Left ventricle myocardium superior (tissue), 1 donor: ENCODE measurements at regions of chr1 and their contacts with region 1.

Region 1: GRCh38 chr1:221494670-221495069 is 247.2 kb downstream of the DUSP10 start:
- DNase-seq: no peak
- ATAC-seq: no peak

Region 2: DNA sequence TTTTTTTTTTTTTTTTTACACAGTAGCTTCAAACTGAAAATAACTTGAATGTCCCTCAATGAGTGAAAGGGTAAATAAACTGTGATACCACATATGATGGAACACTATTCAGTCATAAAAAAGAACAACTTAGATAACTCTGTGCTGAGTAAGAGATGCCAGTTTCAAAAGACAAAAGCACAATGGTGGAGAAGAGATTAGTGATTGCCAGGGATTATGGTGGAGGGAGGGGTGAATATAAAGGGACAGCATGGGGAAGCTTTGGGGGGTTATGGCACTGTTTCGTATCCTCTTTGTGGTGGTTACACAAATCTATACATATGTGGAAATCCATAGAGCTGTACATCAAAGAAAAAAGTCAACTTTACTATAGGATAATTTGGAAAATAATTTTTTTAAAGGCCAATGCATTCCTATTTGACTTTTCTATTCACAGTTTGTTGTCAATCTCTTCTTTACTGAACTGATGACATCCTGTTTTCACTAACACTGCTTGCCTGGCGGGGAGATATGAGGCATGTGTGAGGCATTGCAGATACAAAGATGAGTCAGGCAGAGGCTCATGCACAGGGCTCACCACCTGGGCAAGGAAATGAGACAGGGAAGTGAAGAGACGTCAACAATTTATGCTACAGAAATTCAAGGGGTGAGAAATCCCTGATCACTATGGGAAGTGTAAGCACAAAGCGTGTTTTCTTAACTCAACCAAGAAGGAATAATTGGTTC is 55.5 kb before region 1 on chr1:
- intact Hi-C with region 1: no loop called
- DNase-seq: no peak
- ATAC-seq: no peak

Region 3: DNA sequence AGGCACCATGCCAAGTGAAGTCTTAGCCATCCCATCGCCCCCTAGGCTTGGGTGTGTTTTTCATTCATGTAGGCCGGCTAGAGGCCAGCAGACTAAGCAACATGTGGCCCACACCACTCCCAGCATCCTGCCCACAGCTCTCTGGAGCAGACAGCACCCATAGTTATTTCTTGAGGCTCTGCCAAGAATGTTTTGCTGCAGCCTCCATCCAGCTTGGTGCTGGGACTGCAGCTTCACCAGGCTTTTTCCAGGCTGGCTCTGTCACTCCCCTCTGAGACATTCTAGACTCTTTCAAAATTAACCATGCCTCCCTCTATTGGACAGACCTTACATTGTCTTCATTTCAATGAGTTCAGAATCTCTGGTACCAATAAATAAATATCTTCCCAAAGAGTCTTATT is 143.0 kb after region 1 on chr1:
- intact Hi-C with region 1: loop called (anchors 10 kb)
- DNase-seq: no peak
- ATAC-seq: peak; percentile 80